Activated CD8-positive, alpha-beta memory T cell treated with anti-CD3 and anti-CD28 coated beads, Interleukin-2, amount 10 ng/mL, durations not matched to agents 7 days and 5 days (primary cell): ENCODE measurements at regions of chr2 and their contacts with region 1.

Region 1: DNA sequence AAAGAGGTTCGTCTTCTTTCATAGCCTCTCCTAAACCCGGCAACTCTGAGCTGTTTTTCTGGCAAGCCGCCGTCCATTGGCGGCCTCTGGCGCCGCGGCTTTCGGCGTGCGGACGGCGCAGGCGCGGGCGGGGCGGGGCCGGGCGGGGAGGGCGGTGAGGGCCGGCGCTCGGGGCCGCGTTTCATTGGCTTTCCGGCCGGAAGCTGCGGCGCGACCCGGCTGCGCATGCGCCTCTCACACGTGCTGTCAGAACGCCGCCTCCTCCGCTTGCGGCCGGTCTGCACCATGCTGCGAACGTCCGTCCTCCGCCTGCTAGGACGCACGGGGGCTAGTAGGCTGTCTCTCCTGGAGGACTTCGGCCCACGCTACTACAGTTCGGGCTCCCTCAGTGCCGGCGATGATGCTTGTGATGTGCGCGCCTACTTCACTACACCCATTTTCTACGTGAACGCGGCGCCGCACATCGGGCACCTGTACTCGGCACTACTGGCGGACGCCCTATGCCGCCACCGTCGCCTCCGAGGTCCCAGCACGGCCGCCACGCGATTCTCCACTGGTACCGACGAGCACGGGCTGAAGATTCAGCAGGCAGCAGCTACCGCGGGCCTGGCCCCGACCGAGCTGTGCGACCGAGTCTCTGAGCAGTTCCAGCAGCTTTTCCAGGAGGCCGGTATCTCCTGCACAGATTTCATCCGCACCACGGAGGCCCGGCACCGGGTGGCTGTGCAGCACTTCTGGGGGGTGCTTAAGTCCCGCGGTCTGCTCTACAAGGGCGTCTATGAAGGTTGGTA is at the start of gene MARS2:
- DNase-seq: peak; percentile 94
- ATAC-seq: peak; percentile 88
- H3K4me3 Mint-ChIP-seq: peak within 1 kb of the TSS; percentile 83
- H3K27ac Mint-ChIP-seq: peak within 1 kb of the TSS; percentile 94
- H3K4me1 Mint-ChIP-seq: peaks cover 47% of the 10 kb centered on the region
- H3K27me3 Mint-ChIP-seq: no peaks in the 10 kb centered on the region
- total RNA-seq, gene MARS2: 17.8 to 22.0 TPM

Region 2: GRCh38 chr2:197425550-197425949 is 279.8 kb before region 1 on chr2:
- CTCF ChIA-PET with region 1: no interaction called
- DNase-seq: no peak
- ATAC-seq: no peak
- H3K4me3 Mint-ChIP-seq: no peak overlapping the region
- H3K27ac Mint-ChIP-seq: no peak overlapping the region
- H3K4me1 Mint-ChIP-seq: peaks cover 62% of the 10 kb centered on the region
- H3K27me3 Mint-ChIP-seq: no peaks in the 10 kb centered on the region

Region 3: DNA sequence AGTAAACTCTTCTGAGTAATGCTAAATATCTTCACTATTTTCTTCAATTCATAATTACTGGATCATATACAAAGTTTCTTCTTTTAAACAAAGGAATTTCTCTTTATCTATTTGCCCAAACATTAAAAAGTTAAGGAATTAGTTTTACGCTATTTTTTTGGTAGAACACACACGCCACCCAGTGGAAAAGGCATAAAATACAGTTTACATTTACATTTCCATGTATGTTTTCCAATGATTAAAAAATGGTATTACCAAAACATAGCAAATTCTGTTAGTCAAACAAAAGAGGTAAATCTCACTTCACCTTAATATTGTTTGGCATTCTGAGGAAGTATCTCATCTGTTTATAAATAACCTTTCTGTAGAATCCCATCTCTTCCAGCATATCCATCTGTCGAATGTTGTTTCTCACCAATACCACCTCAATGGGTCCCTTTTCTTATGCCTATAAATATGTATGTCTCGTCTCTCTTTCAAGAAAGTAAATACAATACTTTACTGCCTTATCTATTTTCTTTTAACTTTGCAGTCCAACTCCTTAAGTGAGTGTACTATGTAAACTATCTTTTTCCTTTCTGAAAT is 72.6 kb after region 1 on chr2:
- CTCF ChIA-PET with region 1: interaction called, 27 read pairs
- DNase-seq: no peak
- ATAC-seq: no peak
- H3K4me3 Mint-ChIP-seq: no peak overlapping the region
- H3K27ac Mint-ChIP-seq: no peak overlapping the region
- H3K4me1 Mint-ChIP-seq: peaks cover 6% of the 10 kb centered on the region
- H3K27me3 Mint-ChIP-seq: peaks cover 12% of the 10 kb centered on the region